Activated T-helper 2 cell treated with anti-CD3 and anti-CD28 coated beads, Interferon-gamma antibody, Interleukin-2, Interleukin-4, amounts not matched to agents 10 μg/mL and 5 μg/mL and 100 μg/mL, durations not matched to agents 14 hours and 24 hours and 36 hours (primary cell): ENCODE measurements at regions of chr2 and their contacts with region 1.

Region 1: GRCh38 chr2:55050133-55050994 is at the start of gene RTN4:
- DNase-seq: peak; percentile 99
- H3K4me3 Mint-ChIP-seq: peak within 1 kb of the TSS; percentile 99
- H3K27ac Mint-ChIP-seq: peak within 1 kb of the TSS; percentile 99
- H3K4me1 Mint-ChIP-seq: peaks cover 61% of the 10 kb centered on the region
- H3K27me3 Mint-ChIP-seq: no peaks in the 10 kb centered on the region
- total RNA-seq, gene RTN4: 91.2 and 93.3 TPM in 2 replicates

Region 2: GRCh38 chr2:55010149-55010591 is 40.2 kb before region 1 on chr2:
- intact Hi-C with region 1: loop called (anchors 2 kb)
- DNase-seq: peak; percentile 40
- H3K4me3 Mint-ChIP-seq: peak overlapping the region; percentile 85
- H3K27ac Mint-ChIP-seq: peak overlapping the region; percentile 70
- H3K4me1 Mint-ChIP-seq: peaks cover 56% of the 10 kb centered on the region
- H3K27me3 Mint-ChIP-seq: no peaks in the 10 kb centered on the region

Region 3: DNA sequence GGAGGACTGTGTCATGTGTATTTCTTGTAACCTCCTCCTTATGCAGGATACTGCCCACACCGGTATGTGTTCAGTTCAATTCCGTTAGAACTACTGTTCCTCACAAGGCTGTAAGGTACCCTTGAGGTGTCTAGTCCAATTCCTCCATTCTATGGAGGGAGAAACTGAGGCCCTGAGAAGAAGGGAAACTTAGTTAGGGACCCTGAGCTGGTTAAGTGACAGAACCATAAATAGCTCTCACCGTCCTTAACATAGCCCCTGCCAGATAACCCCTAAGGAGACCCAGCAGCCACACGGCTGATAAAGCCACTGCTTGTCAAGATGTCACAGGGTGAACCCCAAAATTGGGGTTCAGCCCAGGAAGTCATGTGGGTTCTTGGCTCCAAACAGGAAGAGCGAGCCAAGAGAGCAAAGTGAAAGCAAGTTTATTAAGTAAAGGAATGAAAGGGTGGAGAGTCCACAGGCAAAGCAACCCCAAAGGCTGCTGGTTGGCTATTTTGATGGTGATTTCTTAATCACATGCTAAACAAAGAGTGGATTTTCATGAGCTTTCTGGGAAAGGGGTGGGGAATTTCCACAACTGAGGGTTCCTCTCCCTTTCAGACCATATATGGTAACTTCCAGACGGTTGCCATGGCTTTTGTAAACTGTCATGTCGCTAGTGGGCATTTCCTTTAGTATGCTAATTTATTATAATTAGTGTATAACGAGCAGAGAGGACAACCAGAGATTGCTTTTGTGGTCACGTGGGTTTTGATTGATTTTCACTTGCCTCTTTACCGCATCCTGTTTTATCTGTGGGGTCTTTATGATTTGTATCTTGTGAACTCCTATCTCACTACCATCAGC is 83.3 kb after region 1 on chr2:
- intact Hi-C with region 1: loop called (anchors 2 kb)
- DNase-seq: peak; percentile 41
- H3K4me3 Mint-ChIP-seq: peak overlapping the region; percentile 73
- H3K27ac Mint-ChIP-seq: peak overlapping the region; percentile 92
- H3K4me1 Mint-ChIP-seq: peaks cover 20% of the 10 kb centered on the region
- H3K27me3 Mint-ChIP-seq: no peaks in the 10 kb centered on the region

Region 4: GRCh38 chr2:55204950-55205349 is 154.6 kb after region 1 on chr2:
- intact Hi-C with region 1: no loop called
- DNase-seq: no peak
- H3K4me3 Mint-ChIP-seq: no peak overlapping the region
- H3K27ac Mint-ChIP-seq: no peak overlapping the region
- H3K4me1 Mint-ChIP-seq: no peaks in the 10 kb centered on the region
- H3K27me3 Mint-ChIP-seq: no peaks in the 10 kb centered on the region

Region 5: DNA sequence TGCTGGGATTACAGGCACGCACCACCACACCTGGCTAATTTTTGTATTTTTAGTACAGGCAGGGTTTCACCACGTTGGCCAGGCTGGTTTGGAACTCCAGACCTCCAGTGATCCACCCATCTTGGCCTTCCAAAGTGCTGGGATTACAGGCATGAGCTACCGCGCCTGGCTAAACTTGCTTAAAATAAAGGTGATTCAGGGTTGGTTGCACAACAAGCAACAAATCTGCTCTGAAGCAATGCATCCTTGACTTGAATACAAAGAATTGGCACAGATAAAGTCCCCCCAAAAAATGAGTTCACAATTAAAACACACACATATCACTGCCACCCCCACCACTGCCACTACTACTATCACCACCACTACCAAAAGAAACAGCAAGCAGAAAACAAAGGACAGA is 334.4 kb after region 1 on chr2:
- intact Hi-C with region 1: no loop called
- DNase-seq: no peak
- H3K4me3 Mint-ChIP-seq: no peak overlapping the region
- H3K27ac Mint-ChIP-seq: no peak overlapping the region
- H3K4me1 Mint-ChIP-seq: no peaks in the 10 kb centered on the region
- H3K27me3 Mint-ChIP-seq: no peaks in the 10 kb centered on the region